CD14-positive monocyte (primary cell): ENCODE measurements at regions of chr12 and their contacts with region 1.

Region 1: GRCh38 chr12:51341259-51342007 is 5.0 kb downstream of the CELA1 start:
- DNase-seq: peak; percentile 52 to 73 (median 61)
- H3K4me3 ChIP-seq: peak overlapping the region; percentile 0 to 67 (median 25)
- H3K4me3 Mint-ChIP-seq: peak overlapping the region; percentile 70 to 88
- H3K27ac ChIP-seq: no peak overlapping the region
- H3K27ac Mint-ChIP-seq: peak overlapping the region in 2 of 7 donors; percentile 46 to 64
- H3K4me1 ChIP-seq: peaks cover 11 to 12% of the 10 kb centered on the region in 2 donors
- H3K4me1 Mint-ChIP-seq: peaks cover 23% of the 10 kb centered on the region
- H3K27me3 ChIP-seq: no peaks in the 10 kb centered on the region
- H3K27me3 Mint-ChIP-seq: peaks cover 4 to 6% (median 4%) of the 10 kb centered on the region in 3 donors
- CTCF ChIP-seq: peak; percentile 98

Region 2: GRCh38 chr12:50839042-50839441 is 502.4 kb before region 1 on chr12:
- intact Hi-C with region 1: loop called in 1 of 2 experiments (anchors 10 kb)
- DNase-seq: no peak
- H3K4me3 ChIP-seq: no peak overlapping the region
- H3K4me3 Mint-ChIP-seq: no peak overlapping the region
- H3K27ac ChIP-seq: no peak overlapping the region
- H3K27ac Mint-ChIP-seq: no peak overlapping the region
- H3K4me1 ChIP-seq: no peaks in the 10 kb centered on the region
- H3K4me1 Mint-ChIP-seq: peaks cover 7% of the 10 kb centered on the region
- H3K27me3 ChIP-seq: no peaks in the 10 kb centered on the region
- H3K27me3 Mint-ChIP-seq: peaks cover 2 to 6% (median 3%) of the 10 kb centered on the region in 3 donors
- CTCF ChIP-seq: no peak

Region 3: DNA sequence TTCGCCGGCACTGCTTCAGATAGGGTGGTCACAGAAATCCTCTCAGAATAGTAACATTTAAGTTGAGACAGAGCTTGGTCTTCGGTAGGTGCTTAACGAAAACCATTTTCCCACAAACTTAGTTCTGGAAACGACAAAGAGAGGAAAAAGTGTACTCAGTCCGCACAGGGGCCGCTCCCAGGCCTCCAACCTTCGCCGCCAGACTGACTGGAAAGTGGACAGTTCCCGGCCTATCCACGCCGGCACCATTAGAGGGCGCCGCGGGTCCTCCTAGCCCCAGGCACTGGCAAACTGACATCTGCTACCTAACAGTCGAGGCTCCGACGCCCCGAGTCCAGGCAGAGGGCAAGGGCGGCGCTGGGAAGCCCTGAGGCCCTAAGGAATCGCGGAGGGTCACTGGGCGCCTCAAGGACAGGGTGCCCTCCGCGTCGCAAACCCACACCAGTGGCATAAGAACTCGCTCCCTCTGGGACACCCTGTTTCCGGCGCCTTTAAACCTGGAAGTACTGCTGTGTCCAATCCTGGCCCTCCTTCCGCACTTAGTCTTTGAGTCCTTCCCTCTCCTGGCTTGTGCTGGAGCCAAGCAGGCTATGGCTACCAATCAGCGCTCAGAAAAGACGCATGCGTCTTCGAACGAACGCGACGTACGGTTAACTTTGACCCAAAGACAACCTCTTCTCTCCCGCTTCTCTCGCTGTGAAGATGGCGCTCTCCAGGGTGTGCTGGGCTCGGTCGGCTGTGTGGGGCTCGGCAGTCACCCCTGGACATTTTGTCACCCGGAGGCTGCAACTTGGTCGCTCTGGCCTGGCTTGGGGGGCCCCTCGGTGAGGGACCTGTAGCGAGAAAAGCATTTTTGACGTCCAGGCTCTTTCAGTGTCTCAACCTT is 293.5 kb before region 1 on chr12 and contains the start of gene LETMD1:
- intact Hi-C with region 1: loop called (anchors 10 kb)
- DNase-seq: peak; percentile 94 to 98 (median 97)
- H3K4me3 ChIP-seq: peak within 1 kb of the TSS; percentile 67 to 88 (median 85)
- H3K4me3 Mint-ChIP-seq: peak within 1 kb of the TSS; percentile 93 to 98
- H3K27ac ChIP-seq: peak within 1 kb of the TSS; percentile 90
- H3K27ac Mint-ChIP-seq: peak within 1 kb of the TSS; percentile 87 to 97 (median 94)
- H3K4me1 ChIP-seq: peaks cover 18 to 22% of the 10 kb centered on the region in 2 donors
- H3K4me1 Mint-ChIP-seq: peaks cover 19% of the 10 kb centered on the region
- H3K27me3 ChIP-seq: no peaks in the 10 kb centered on the region
- H3K27me3 Mint-ChIP-seq: peaks cover 0 to 5% (median 0%) of the 10 kb centered on the region in 3 donors
- CTCF ChIP-seq: peak; percentile 92
- polyA plus RNA-seq, gene LETMD1: 13.2 to 95.6 (median 16.8) TPM

Region 4: DNA sequence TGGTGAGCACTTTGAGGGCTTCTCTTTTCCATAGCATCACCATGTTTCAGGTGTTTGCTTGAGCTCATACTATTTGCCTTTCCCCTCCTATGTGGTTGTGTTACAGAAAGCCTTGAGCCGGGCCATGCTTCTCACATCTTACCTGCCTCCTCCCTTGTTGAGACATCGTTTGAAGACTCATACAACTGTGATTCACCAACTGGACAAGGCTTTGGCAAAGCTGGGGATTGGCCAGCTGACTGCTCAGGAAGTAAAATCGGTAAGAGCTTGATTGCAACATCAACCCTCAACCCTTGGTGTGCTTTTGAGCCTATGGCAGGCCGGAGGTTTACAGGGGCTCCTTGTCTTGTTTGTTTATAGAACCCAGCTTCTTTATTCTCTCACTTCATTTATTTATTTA is 285.2 kb before region 1 on chr12:
- intact Hi-C with region 1: loop called in 1 of 2 experiments (anchors 10 kb)
- DNase-seq: peak; percentile 21 to 65 (median 44)
- H3K4me3 ChIP-seq: no peak overlapping the region
- H3K4me3 Mint-ChIP-seq: no peak overlapping the region
- H3K27ac ChIP-seq: peak overlapping the region in 1 of 2 donors; percentile 14
- H3K27ac Mint-ChIP-seq: peak overlapping the region in 3 of 7 donors; percentile 40 to 57 (median 56)
- H3K4me1 ChIP-seq: peaks cover 0 to 6% of the 10 kb centered on the region in 2 donors
- H3K4me1 Mint-ChIP-seq: peaks cover 13% of the 10 kb centered on the region
- H3K27me3 ChIP-seq: no peaks in the 10 kb centered on the region
- H3K27me3 Mint-ChIP-seq: no peaks in the 10 kb centered on the region
- CTCF ChIP-seq: no peak

Region 5: GRCh38 chr12:51269174-51270066 is 72.0 kb before region 1 on chr12:
- intact Hi-C with region 1: loop called in 1 of 2 experiments (anchors 10 kb)
- DNase-seq: peak in 1 of 3 donors; percentile 22
- H3K4me3 ChIP-seq: peak overlapping the region; percentile 16 to 90 (median 75)
- H3K4me3 Mint-ChIP-seq: peak overlapping the region; percentile 87 to 93
- H3K27ac ChIP-seq: no peak overlapping the region
- H3K27ac Mint-ChIP-seq: peak overlapping the region in 1 of 7 donors; percentile 68
- H3K4me1 ChIP-seq: peaks cover 16 to 21% of the 10 kb centered on the region in 2 donors
- H3K4me1 Mint-ChIP-seq: peaks cover 18% of the 10 kb centered on the region
- H3K27me3 ChIP-seq: peaks cover 20 to 35% of the 10 kb centered on the region in 2 donors
- H3K27me3 Mint-ChIP-seq: peaks cover 35 to 51% (median 41%) of the 10 kb centered on the region in 3 donors
- CTCF ChIP-seq: no peak

Region 6: GRCh38 chr12:51405801-51406207 is 64.4 kb after region 1 on chr12:
- intact Hi-C with region 1: no loop called
- DNase-seq: no peak
- H3K4me3 ChIP-seq: no peak overlapping the region
- H3K4me3 Mint-ChIP-seq: no peak overlapping the region
- H3K27ac ChIP-seq: no peak overlapping the region
- H3K27ac Mint-ChIP-seq: no peak overlapping the region
- H3K4me1 ChIP-seq: peaks cover 18% of the 10 kb centered on the region in 2 donors
- H3K4me1 Mint-ChIP-seq: peaks cover 20% of the 10 kb centered on the region
- H3K27me3 ChIP-seq: no peaks in the 10 kb centered on the region
- H3K27me3 Mint-ChIP-seq: peaks cover 2 to 6% (median 2%) of the 10 kb centered on the region in 3 donors
- CTCF ChIP-seq: no peak